Right lobe of liver (tissue), 6 donors: ENCODE measurements at regions of chr7 and their contacts with region 1.

Region 1: GRCh38 chr7:129163875-129164544 is 19.5 kb downstream of the TSPAN33 start:
- DNase-seq: no peak
- ATAC-seq: peak; percentile 50 to 70 (median 64)
- H3K4me3 ChIP-seq: no peak overlapping the region
- H3K27ac ChIP-seq: no peak overlapping the region
- H3K4me1 ChIP-seq: no peaks in the 10 kb centered on the region
- H3K27me3 ChIP-seq: no peaks in the 10 kb centered on the region
- CTCF ChIP-seq: peak; percentile 71 to 91 (median 81)
- POLR2A ChIP-seq: no peak

Region 2: GRCh38 chr7:129210256-129210988 is 46.4 kb after region 1 on chr7:
- intact Hi-C with region 1: loop called (anchors 5 kb)
- DNase-seq: peak; percentile 83 to 86 (median 84)
- ATAC-seq: peak; percentile 74 to 89 (median 81)
- H3K4me3 ChIP-seq: no peak overlapping the region
- H3K27ac ChIP-seq: no peak overlapping the region
- H3K4me1 ChIP-seq: peaks cover 0 to 15% (median 5%) of the 10 kb centered on the region in 4 donors
- H3K27me3 ChIP-seq: no peaks in the 10 kb centered on the region
- CTCF ChIP-seq: peak; percentile 91 to 95 (median 92)
- POLR2A ChIP-seq: no peak

Region 3: DNA sequence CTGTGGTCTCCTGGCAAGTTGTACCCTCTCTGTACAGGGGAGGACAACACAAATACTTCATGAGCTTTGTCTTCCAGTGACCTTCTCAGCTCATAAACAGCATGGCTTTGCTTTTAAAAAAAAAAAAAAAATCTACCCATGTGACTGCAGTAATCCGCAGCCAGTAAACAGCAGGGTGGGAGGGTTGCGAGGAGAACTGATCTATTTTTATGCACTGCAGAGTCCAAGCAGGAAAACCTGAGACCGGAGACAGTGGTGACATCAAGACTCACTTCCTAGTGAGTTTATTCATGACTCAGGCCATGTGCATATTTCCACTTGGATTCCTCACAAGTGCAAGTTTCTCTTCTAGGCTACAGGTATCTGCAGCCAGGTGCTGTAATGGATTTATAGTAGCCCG is 575.4 kb after region 1 on chr7:
- intact Hi-C with region 1: no loop called
- DNase-seq: no peak
- ATAC-seq: peak; percentile 67 to 92 (median 85)
- H3K4me3 ChIP-seq: no peak overlapping the region
- H3K27ac ChIP-seq: no peak overlapping the region
- H3K4me1 ChIP-seq: no peaks in the 10 kb centered on the region
- H3K27me3 ChIP-seq: no peaks in the 10 kb centered on the region
- CTCF ChIP-seq: no peak
- POLR2A ChIP-seq: no peak